Activated naive CD4-positive, alpha-beta T cell treated with anti-CD3 and anti-CD28 coated beads for 36 hours (primary cell): ENCODE measurements at regions of chr12 and their contacts with region 1.

Region 1: GRCh38 chr12:47779301-47779942 is 6.4 kb downstream of the SLC48A1 start:
- DNase-seq: peak; percentile 97
- H3K4me3 Mint-ChIP-seq: no peak overlapping the region
- H3K27ac Mint-ChIP-seq: peak overlapping the region; percentile 18
- H3K4me1 Mint-ChIP-seq: peaks cover 30% of the 10 kb centered on the region
- H3K27me3 Mint-ChIP-seq: no peaks in the 10 kb centered on the region

Region 2: DNA sequence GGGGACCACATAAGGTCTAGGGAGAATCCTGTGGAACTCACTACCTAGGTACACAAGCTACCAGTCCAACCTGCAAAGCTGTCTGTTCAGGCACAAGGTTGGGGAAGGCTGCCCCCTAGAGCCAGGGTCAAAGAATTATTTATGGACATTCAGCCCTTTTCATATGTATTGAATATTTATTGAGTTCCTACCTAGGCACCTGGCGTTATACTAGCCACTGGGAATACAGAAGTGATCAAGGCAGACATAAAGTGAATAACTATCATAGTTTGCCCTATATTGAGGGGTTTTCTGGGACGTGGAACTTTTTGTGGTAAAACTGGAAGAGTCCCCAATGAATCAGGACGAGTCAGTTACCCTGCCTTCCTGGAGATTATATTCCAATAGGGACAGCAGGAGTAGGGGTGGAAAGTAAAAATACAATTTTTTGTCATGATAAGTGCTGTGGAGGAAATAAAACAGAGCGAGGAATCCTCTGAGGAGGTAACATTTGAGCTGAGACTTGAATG is 12.2 kb before region 1 on chr12:
- CTCF ChIA-PET with region 1: interaction called, 79 read pairs
- intact Hi-C with region 1: no loop called
- DNase-seq: peak; percentile 89
- H3K4me3 Mint-ChIP-seq: no peak overlapping the region
- H3K27ac Mint-ChIP-seq: no peak overlapping the region
- H3K4me1 Mint-ChIP-seq: no peaks in the 10 kb centered on the region
- H3K27me3 Mint-ChIP-seq: no peaks in the 10 kb centered on the region

Region 3: GRCh38 chr12:47797441-47797840 is 18.0 kb after region 1 on chr12:
- CTCF ChIA-PET with region 1: interaction called, 21 read pairs
- intact Hi-C with region 1: no loop called
- DNase-seq: peak; percentile 55
- H3K4me3 Mint-ChIP-seq: no peak overlapping the region
- H3K27ac Mint-ChIP-seq: peak overlapping the region; percentile 87
- H3K4me1 Mint-ChIP-seq: peaks cover 38% of the 10 kb centered on the region
- H3K27me3 Mint-ChIP-seq: no peaks in the 10 kb centered on the region

Region 4: DNA sequence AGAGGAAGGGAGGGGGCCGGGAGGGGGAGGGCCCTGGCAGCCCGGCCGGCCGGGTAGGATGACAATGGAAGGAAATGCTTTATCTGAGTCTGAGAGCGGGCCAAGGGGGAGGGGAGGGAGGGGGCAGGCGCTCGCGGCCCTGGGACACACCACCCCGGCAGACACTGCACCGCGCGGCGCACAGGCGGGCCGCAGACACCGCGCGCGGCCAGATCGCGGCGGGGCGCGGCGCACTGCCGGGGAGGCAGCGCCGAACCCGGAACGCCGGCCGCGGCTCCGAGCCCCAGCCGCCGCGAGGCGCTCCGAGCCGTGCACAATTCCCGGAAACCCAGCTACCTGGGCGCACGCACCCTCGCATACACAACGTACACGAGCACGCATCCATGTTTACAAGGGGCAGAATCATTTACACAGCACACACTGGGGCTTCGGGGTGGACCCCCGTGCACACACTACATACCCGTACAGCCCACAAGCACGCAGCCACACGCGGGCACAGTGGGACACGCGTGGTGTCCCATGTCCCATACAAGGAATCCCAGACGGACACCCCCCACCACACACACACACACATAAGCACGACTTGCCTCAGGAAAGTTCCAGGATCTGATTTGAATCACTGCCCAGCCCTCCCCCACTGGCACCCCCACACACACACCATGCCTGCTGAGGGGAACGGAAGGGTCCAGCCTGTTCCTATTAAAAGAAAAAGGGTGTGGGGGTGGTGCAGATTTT is 40.6 kb after region 1 on chr12 and contains the start of gene HDAC7:
- CTCF ChIA-PET with region 1: interaction called, 10 read pairs
- intact Hi-C with region 1: no loop called
- DNase-seq: peak; percentile 82
- H3K4me3 Mint-ChIP-seq: peak within 1 kb of the TSS; percentile 95
- H3K27ac Mint-ChIP-seq: peak within 1 kb of the TSS; percentile 99
- H3K4me1 Mint-ChIP-seq: peaks cover 63% of the 10 kb centered on the region
- H3K27me3 Mint-ChIP-seq: no peaks in the 10 kb centered on the region
- total RNA-seq, gene HDAC7: 272 to 289 TPM